Endothelial cell of umbilical vein (primary cell): ENCODE measurements at regions of chr2 and their contacts with region 1.

Region 1: GRCh38 chr2:42663106-42663780 is 94.8 kb downstream of the MTA3 start:
- DNase-seq: peak; percentile 82
- H3K4me3 ChIP-seq: no peak overlapping the region
- H3K27ac ChIP-seq: no peak overlapping the region
- H3K4me1 ChIP-seq: no peaks in the 10 kb centered on the region
- H3K27me3 ChIP-seq: no peaks in the 10 kb centered on the region
- CTCF ChIP-seq: peak; percentile 94 to 97
- POLR2A ChIP-seq: no peak

Region 2: DNA sequence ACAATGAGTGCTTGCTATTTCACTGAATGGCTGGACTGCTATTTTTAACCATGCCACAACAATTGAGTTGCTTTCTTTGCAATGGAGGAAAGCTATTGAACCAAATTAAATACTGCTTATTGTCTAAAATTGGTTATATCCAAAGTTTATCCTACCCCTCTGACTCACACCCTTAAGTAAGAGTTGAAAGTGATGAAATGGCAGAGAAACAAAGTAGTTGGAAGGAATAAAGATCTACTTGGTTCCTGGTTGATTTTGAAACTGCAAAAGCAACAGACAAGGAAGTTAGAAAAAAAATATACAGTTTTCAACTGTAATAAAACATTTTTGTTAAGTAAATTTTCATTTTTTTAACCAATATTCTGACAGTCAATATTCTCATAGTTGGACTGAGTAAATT is 446.5 kb before region 1 on chr2:
- CTCF ChIA-PET with region 1: no interaction called
- POLR2A ChIA-PET with region 1: no interaction called
- dilution Hi-C with region 1: no loop called
- intact Hi-C with region 1: no loop called
- DNase-seq: no peak
- H3K4me3 ChIP-seq: no peak overlapping the region
- H3K27ac ChIP-seq: no peak overlapping the region
- H3K4me1 ChIP-seq: no peaks in the 10 kb centered on the region
- H3K27me3 ChIP-seq: no peaks in the 10 kb centered on the region
- CTCF ChIP-seq: no peak
- POLR2A ChIP-seq: no peak

Region 3: DNA sequence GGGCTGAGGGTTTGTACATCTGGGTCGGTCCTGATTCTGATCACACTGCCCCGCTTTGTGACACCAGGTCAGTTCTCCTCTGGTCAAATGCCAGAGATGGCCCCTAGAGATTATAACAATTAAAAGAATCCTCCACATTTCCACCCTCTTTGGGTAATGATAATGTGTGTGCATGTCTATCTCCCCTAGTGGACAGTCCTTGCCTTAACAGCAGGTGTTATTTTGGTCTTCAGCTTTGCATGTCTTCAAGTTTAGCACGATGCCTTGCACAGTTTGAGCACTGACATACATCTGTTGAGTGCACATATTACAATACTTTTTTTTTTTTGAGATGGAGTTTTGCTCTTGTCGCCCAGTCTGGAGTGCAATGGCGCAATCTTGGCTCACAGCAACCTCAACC is 276.6 kb before region 1 on chr2:
- CTCF ChIA-PET with region 1: interaction called, 18 read pairs
- POLR2A ChIA-PET with region 1: no interaction called
- dilution Hi-C with region 1: no loop called
- intact Hi-C with region 1: loop called (anchors 2 kb)
- DNase-seq: no peak
- H3K4me3 ChIP-seq: no peak overlapping the region
- H3K27ac ChIP-seq: no peak overlapping the region
- H3K4me1 ChIP-seq: no peaks in the 10 kb centered on the region
- H3K27me3 ChIP-seq: peaks cover 5 to 8% of the 10 kb centered on the region in 2 experiments
- CTCF ChIP-seq: peak in 1 of 2 donors; percentile 26
- POLR2A ChIP-seq: no peak

Region 4: GRCh38 chr2:42513257-42513918 is 149.9 kb before region 1 on chr2:
- CTCF ChIA-PET with region 1: interaction called, 27 read pairs
- POLR2A ChIA-PET with region 1: no interaction called
- dilution Hi-C with region 1: no loop called
- intact Hi-C with region 1: loop called (anchors 1 kb)
- DNase-seq: peak; percentile 49
- H3K4me3 ChIP-seq: no peak overlapping the region
- H3K27ac ChIP-seq: no peak overlapping the region
- H3K4me1 ChIP-seq: peaks cover 7% of the 10 kb centered on the region
- H3K27me3 ChIP-seq: no peaks in the 10 kb centered on the region
- CTCF ChIP-seq: peak; percentile 38 to 58
- POLR2A ChIP-seq: no peak

Region 5: DNA sequence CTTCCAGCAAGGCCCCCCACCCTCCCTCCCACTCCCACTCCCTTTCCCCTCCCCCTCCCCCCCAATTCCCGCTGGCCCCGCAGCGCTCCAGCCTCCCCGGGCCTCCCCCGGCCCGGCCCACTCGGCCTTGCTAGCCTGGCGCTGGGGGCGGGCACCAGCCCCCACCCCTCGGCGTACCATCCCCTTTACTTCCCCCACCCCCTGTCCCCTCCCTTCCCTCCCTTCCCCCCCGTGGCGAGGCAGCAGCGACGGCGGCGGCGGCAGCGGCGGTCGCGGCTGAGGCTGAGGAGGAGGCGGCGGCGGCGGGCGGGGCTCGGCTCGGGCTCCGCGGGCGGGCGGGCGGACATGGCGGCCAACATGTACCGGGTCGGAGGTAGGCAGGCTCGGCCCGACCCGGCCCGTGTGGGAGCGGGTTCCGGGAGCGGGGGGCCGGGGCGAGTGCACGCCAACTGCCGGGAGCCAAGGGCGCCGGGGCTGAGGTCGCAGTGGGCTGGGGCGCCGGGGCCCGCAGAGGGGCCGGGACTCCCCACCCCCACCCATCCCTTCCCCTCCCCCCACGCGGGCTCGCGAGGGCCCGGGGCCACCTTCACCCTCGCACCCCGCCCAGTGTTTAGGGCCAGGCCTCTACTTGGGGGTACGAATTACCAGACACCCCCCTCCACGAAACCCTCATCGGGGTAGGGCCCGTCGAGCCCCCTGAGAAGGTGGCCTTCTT is 94.7 kb before region 1 on chr2 and contains the start of gene MTA3:
- CTCF ChIA-PET with region 1: interaction called, 17 read pairs
- POLR2A ChIA-PET with region 1: no interaction called
- dilution Hi-C with region 1: no loop called
- intact Hi-C with region 1: loop called (anchors 5 kb)
- DNase-seq: peak; percentile 37
- H3K4me3 ChIP-seq: peak within 1 kb of the TSS; percentile 57 to 95 (median 75)
- H3K27ac ChIP-seq: peak within 1 kb of the TSS; percentile 42
- H3K4me1 ChIP-seq: peaks cover 9% of the 10 kb centered on the region
- H3K27me3 ChIP-seq: no peaks in the 10 kb centered on the region
- CTCF ChIP-seq: no peak
- POLR2A ChIP-seq: no peak
- total RNA-seq, gene MTA3: 49.9 and 53.3 TPM in 2 replicates

Region 6: GRCh38 chr2:42673989-42674579 is 10.8 kb after region 1 on chr2:
- CTCF ChIA-PET with region 1: interaction called, 22 read pairs
- POLR2A ChIA-PET with region 1: no interaction called
- dilution Hi-C with region 1: no loop called
- intact Hi-C with region 1: no loop called
- DNase-seq: no peak
- H3K4me3 ChIP-seq: no peak overlapping the region
- H3K27ac ChIP-seq: no peak overlapping the region
- H3K4me1 ChIP-seq: no peaks in the 10 kb centered on the region
- H3K27me3 ChIP-seq: no peaks in the 10 kb centered on the region
- CTCF ChIP-seq: no peak
- POLR2A ChIP-seq: no peak

Region 7: GRCh38 chr2:43059183-43059897 is 396.1 kb after region 1 on chr2:
- CTCF ChIA-PET with region 1: no interaction called
- POLR2A ChIA-PET with region 1: no interaction called
- dilution Hi-C with region 1: no loop called
- intact Hi-C with region 1: no loop called
- DNase-seq: peak; percentile 83
- H3K4me3 ChIP-seq: no peak overlapping the region
- H3K27ac ChIP-seq: no peak overlapping the region
- H3K4me1 ChIP-seq: peaks cover 5% of the 10 kb centered on the region
- H3K27me3 ChIP-seq: no peaks in the 10 kb centered on the region
- CTCF ChIP-seq: no peak
- POLR2A ChIP-seq: no peak